Ascending aorta (tissue), 2 donors: ENCODE measurements at regions of chr3 and their contacts with region 1.

Region 1: GRCh38 chr3:99875929-99876841 is 58.5 kb downstream of the CMSS1 start:
- DNase-seq: peak; percentile 39 to 91
- H3K4me3 ChIP-seq: peak overlapping the region; percentile 85 to 90
- H3K27ac ChIP-seq: peak overlapping the region; percentile 97 to 98
- H3K4me1 ChIP-seq: peaks cover 0 to 17% of the 10 kb centered on the region in 2 donors
- H3K27me3 ChIP-seq: no peaks in the 10 kb centered on the region
- CTCF ChIP-seq: no peak

Region 2: GRCh38 chr3:99925584-99926212 is 49.5 kb after region 1 on chr3:
- intact Hi-C with region 1: loop called (anchors 5 kb)
- DNase-seq: peak in 1 of 2 donors; percentile 82
- H3K4me3 ChIP-seq: no peak overlapping the region
- H3K27ac ChIP-seq: peak overlapping the region; percentile 78 to 84
- H3K4me1 ChIP-seq: peaks cover 4 to 35% of the 10 kb centered on the region in 2 donors
- H3K27me3 ChIP-seq: no peaks in the 10 kb centered on the region
- CTCF ChIP-seq: no peak

Region 3: DNA sequence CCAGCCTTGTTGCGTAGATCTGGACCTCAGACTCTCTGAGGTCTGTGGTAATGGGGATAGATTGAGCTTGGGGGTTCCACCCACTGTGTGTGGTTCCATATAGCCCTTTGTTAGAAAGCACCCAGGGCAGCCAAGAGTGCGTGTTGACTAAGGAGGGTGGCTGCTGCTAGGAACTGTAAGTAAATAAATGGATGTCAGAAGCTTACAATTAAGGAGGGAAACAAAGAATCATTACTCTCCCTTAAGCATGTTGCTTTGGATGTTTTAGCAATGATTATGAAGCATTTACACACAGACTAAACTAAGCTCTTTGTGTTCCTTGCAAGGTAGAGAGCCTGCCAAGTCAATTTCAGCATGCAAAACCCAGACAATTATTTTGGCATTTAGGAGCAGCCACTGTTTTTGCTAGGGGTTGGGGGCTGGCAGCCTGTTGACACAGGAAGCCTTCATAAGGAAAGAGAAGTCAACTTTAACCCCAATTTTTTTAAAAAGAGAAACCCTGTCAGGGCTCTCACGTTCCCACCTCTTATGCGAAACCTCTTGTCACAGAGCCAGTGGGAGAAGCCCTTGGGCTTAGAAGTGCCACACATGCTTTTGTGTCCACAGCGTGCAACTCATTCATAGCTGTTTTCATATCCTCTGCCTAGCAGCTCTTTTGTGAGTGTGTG is 69.3 kb after region 1 on chr3:
- intact Hi-C with region 1: loop called (anchors 5 kb)
- DNase-seq: peak in 1 of 2 donors; percentile 74
- H3K4me3 ChIP-seq: peak overlapping the region in 1 of 2 donors; percentile 6
- H3K27ac ChIP-seq: peak overlapping the region; percentile 84 to 92
- H3K4me1 ChIP-seq: peaks cover 19 to 67% of the 10 kb centered on the region in 2 donors
- H3K27me3 ChIP-seq: no peaks in the 10 kb centered on the region
- CTCF ChIP-seq: no peak

Region 4: GRCh38 chr3:100041328-100041749 is 165.2 kb after region 1 on chr3:
- intact Hi-C with region 1: loop called (anchors 2 kb)
- DNase-seq: no peak
- H3K4me3 ChIP-seq: no peak overlapping the region
- H3K27ac ChIP-seq: peak overlapping the region; percentile 89 to 94
- H3K4me1 ChIP-seq: peaks cover 9 to 40% of the 10 kb centered on the region in 2 donors
- H3K27me3 ChIP-seq: no peaks in the 10 kb centered on the region
- CTCF ChIP-seq: no peak